Endothelial cell of umbilical vein (primary cell): ENCODE measurements at regions of chr7 and their contacts with region 1.

Region 1: DNA sequence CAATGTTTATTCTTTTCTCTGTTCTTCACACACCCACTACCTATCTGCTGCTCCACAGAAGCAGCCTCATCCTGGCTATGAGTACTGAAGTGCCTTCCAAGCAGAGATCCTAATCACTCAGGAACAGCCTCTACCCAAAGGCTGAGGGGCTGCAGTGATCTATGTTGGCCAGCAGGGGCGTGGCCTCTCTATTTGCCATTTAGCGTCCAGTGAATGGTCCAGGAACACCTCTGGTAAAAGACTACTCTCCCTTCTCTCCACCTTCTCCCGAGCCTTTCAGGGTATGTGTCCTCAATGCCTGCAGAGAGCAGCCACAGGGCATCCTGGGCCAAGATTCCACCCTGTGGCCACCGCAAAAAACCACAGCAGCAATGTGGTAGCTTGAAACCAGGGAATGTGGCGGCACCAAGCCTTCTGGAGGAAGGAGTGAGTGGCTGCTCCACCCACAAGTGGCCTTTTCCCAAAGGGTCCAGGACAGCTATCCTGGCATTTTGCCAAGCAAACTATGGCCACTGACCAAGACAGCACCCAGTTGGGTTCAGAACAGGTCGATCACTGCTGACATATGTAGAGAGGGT is 70.9 kb downstream of the SYPL1 start:
- DNase-seq: peak; percentile 35
- H3K4me3 ChIP-seq: no peak overlapping the region
- H3K27ac ChIP-seq: no peak overlapping the region
- H3K4me1 ChIP-seq: no peaks in the 10 kb centered on the region
- H3K27me3 ChIP-seq: peaks cover 4 to 8% of the 10 kb centered on the region in 2 experiments
- CTCF ChIP-seq: peak; percentile 79 to 89
- POLR2A ChIP-seq: no peak

Region 2: GRCh38 chr7:105589356-105590077 is 451.7 kb before region 1 on chr7:
- CTCF ChIA-PET with region 1: interaction called, 4 read pairs
- POLR2A ChIA-PET with region 1: no interaction called
- dilution Hi-C with region 1: no loop called
- intact Hi-C with region 1: loop called (anchors 5 kb)
- DNase-seq: peak; percentile 81
- H3K4me3 ChIP-seq: no peak overlapping the region
- H3K27ac ChIP-seq: no peak overlapping the region
- H3K4me1 ChIP-seq: peaks cover 8% of the 10 kb centered on the region
- H3K27me3 ChIP-seq: no peaks in the 10 kb centered on the region
- CTCF ChIP-seq: peak; percentile 67 to 75
- POLR2A ChIP-seq: no peak

Region 3: GRCh38 chr7:105689067-105689964 is 351.9 kb before region 1 on chr7:
- CTCF ChIA-PET with region 1: interaction called, 3 read pairs
- POLR2A ChIA-PET with region 1: no interaction called
- dilution Hi-C with region 1: no loop called
- intact Hi-C with region 1: loop called (anchors 5 kb)
- DNase-seq: no peak
- H3K4me3 ChIP-seq: no peak overlapping the region
- H3K27ac ChIP-seq: no peak overlapping the region
- H3K4me1 ChIP-seq: peaks cover 6% of the 10 kb centered on the region
- H3K27me3 ChIP-seq: no peaks in the 10 kb centered on the region
- CTCF ChIP-seq: no peak
- POLR2A ChIP-seq: no peak

Region 4: GRCh38 chr7:105769901-105770628 is 271.2 kb before region 1 on chr7:
- CTCF ChIA-PET with region 1: interaction called, 28 read pairs
- POLR2A ChIA-PET with region 1: no interaction called
- dilution Hi-C with region 1: no loop called
- intact Hi-C with region 1: loop called (anchors 1 kb)
- DNase-seq: peak; percentile 16
- H3K4me3 ChIP-seq: no peak overlapping the region
- H3K27ac ChIP-seq: no peak overlapping the region
- H3K4me1 ChIP-seq: peaks cover 7% of the 10 kb centered on the region
- H3K27me3 ChIP-seq: no peaks in the 10 kb centered on the region
- CTCF ChIP-seq: no peak
- POLR2A ChIP-seq: no peak

Region 5: GRCh38 chr7:106009403-106010226 is 31.6 kb before region 1 on chr7:
- CTCF ChIA-PET with region 1: interaction called, 8 read pairs
- POLR2A ChIA-PET with region 1: no interaction called
- dilution Hi-C with region 1: no loop called
- intact Hi-C with region 1: loop called (anchors 1 kb)
- DNase-seq: peak; percentile 84
- H3K4me3 ChIP-seq: no peak overlapping the region
- H3K27ac ChIP-seq: no peak overlapping the region
- H3K4me1 ChIP-seq: peaks cover 2% of the 10 kb centered on the region
- H3K27me3 ChIP-seq: peaks cover 15 to 25% of the 10 kb centered on the region in 2 experiments
- CTCF ChIP-seq: peak; percentile 99
- POLR2A ChIP-seq: no peak